Calu3 (cell line): ENCODE measurements at regions of chr1 and their contacts with region 1.

Region 1: DNA sequence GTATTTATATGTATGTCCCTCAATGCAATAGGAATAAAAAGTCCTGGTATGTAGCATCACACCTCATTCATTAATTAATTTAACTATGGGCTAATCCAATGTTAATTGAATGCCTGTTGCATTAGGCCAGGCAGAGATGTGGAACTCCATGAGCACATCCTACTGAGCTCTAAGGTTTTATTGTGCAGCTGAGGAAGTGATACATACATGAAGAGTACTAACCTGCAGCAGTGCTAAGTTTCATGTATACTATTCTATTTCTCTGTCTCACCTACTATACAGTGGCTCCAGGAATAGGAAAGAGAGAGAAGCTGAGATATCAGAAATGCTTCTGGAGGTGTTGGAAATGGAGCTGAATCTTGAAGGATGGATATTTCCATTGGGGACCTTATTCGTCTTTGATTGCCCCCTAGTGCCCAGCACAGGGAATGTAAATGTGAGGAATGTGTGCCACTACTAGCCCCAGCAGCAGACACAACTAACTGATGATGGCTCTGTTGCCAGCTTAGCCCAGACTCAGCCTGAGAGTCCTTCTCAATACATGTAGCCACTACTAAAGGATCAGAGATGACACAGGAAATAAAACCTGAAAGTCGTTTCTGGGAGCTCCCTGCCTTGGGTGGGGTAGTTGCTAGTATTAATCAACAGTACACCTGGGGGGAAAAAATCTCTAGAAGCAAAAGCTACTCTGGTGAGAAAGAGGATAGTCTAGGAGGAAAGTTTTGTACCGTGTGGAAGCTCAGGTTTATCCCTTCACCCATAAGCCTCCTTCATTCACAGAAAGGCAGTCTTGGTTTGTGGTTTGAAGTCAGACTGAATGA is 173.3 kb upstream of the FOXD3 start:
- DNase-seq: peak; percentile 63
- H3K4me3 Mint-ChIP-seq: no peak overlapping the region
- H3K27ac Mint-ChIP-seq: no peak overlapping the region
- H3K4me1 Mint-ChIP-seq: no peaks in the 10 kb centered on the region
- H3K27me3 Mint-ChIP-seq: peaks cover 52% of the 10 kb centered on the region
- CTCF ChIP-seq: peak; percentile 68

Region 2: GRCh38 chr1:62841587-62842169 is 307.4 kb before region 1 on chr1:
- CTCF ChIA-PET with region 1: interaction called, 5 read pairs
- intact Hi-C with region 1: loop called (anchors 2 kb)
- DNase-seq: peak; percentile 44
- H3K4me3 Mint-ChIP-seq: no peak overlapping the region
- H3K27ac Mint-ChIP-seq: no peak overlapping the region
- H3K4me1 Mint-ChIP-seq: no peaks in the 10 kb centered on the region
- H3K27me3 Mint-ChIP-seq: no peaks in the 10 kb centered on the region
- CTCF ChIP-seq: peak; percentile 64

Region 3: GRCh38 chr1:62912028-62912638 is 236.9 kb before region 1 on chr1:
- CTCF ChIA-PET with region 1: interaction called, 3 read pairs
- intact Hi-C with region 1: loop called (anchors 5 kb)
- DNase-seq: peak; percentile 8
- H3K4me3 Mint-ChIP-seq: no peak overlapping the region
- H3K27ac Mint-ChIP-seq: no peak overlapping the region
- H3K4me1 Mint-ChIP-seq: no peaks in the 10 kb centered on the region
- H3K27me3 Mint-ChIP-seq: peaks cover 42% of the 10 kb centered on the region
- CTCF ChIP-seq: peak; percentile 47

Region 4: DNA sequence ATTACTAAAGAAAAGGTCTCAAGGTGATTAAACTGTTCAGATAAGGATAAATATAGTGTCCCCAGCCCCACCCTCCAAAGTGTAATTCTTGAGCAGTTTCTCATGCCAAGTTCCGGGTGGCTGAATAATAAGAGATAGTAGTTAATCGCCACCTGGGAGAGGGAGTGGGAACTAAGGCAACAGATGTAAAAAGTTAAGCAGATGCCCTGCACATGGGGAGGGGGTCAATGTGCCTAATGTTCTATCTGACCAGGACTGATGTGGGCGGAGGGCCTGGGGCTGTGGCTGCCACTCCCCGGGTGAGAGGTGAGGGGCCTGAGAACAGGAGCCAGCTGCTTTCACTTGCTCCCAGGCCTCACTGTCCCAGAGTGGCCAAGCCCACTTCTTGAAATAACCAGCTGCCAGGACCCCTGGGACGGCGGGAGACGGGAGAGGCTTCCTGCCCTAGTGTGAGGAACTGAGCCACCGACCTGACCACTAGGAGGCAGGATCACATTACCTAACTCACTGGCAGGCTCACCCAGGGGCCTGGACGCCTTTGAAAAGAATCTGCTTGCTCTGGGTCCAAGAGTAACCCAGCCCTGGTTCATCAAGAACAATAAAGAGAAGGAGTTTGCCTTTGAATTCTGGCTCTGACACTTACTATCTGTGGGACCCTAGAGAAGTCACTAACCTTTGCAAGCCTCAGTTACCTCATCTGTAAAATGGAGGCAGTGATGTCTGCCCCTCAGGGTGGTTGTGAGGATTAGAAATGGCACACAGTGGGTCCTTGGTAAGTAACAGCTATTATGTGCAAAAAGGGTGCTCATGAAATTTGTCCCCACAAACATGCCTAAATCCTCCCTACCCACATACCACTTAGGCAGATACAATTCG is 185.9 kb before region 1 on chr1:
- CTCF ChIA-PET with region 1: interaction called, 3 read pairs
- intact Hi-C with region 1: loop called (anchors 1 kb)
- DNase-seq: peak; percentile 61
- H3K4me3 Mint-ChIP-seq: no peak overlapping the region
- H3K27ac Mint-ChIP-seq: no peak overlapping the region
- H3K4me1 Mint-ChIP-seq: peaks cover 13% of the 10 kb centered on the region
- H3K27me3 Mint-ChIP-seq: peaks cover 19% of the 10 kb centered on the region
- CTCF ChIP-seq: peak; percentile 56

Region 5: GRCh38 chr1:62977366-62977765 is 171.7 kb before region 1 on chr1:
- CTCF ChIA-PET with region 1: no interaction called
- intact Hi-C with region 1: no loop called
- DNase-seq: no peak
- H3K4me3 Mint-ChIP-seq: no peak overlapping the region
- H3K27ac Mint-ChIP-seq: no peak overlapping the region
- H3K4me1 Mint-ChIP-seq: no peaks in the 10 kb centered on the region
- H3K27me3 Mint-ChIP-seq: peaks cover 49% of the 10 kb centered on the region
- CTCF ChIP-seq: no peak

Region 6: GRCh38 chr1:63004868-63005267 is 144.2 kb before region 1 on chr1:
- CTCF ChIA-PET with region 1: interaction called, 33 read pairs
- intact Hi-C with region 1: loop called (anchors 2 kb)
- DNase-seq: peak; percentile 44
- H3K4me3 Mint-ChIP-seq: no peak overlapping the region
- H3K27ac Mint-ChIP-seq: no peak overlapping the region
- H3K4me1 Mint-ChIP-seq: no peaks in the 10 kb centered on the region
- H3K27me3 Mint-ChIP-seq: peaks cover 59% of the 10 kb centered on the region
- CTCF ChIP-seq: peak; percentile 37

Region 7: DNA sequence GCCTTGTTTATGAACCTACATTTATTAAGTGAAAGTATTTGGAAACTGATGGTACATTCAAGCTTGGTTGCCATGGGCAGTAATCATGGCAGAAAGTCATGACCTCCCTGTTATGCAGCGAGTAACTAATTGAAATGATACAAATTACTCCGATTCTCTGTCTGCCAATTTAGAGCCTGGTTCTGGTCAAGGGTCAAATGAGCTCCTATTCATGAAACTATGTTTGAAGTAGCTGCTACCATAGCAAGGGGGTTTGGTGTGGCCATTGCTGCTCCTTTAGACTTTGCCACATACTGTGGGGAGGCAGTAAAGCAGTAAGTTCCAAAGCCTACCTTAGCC is 13.9 kb before region 1 on chr1:
- CTCF ChIA-PET with region 1: interaction called, 11 read pairs
- intact Hi-C with region 1: no loop called
- DNase-seq: no peak
- H3K4me3 Mint-ChIP-seq: no peak overlapping the region
- H3K27ac Mint-ChIP-seq: no peak overlapping the region
- H3K4me1 Mint-ChIP-seq: peaks cover 7% of the 10 kb centered on the region
- H3K27me3 Mint-ChIP-seq: peaks cover 8% of the 10 kb centered on the region
- CTCF ChIP-seq: no peak

Region 8: GRCh38 chr1:63316984-63317816 is 168.2 kb after region 1 on chr1:
- CTCF ChIA-PET with region 1: no interaction called
- intact Hi-C with region 1: no loop called
- DNase-seq: peak; percentile 95
- H3K4me3 Mint-ChIP-seq: peak overlapping the region; percentile 66
- H3K27ac Mint-ChIP-seq: no peak overlapping the region
- H3K4me1 Mint-ChIP-seq: peaks cover 8% of the 10 kb centered on the region
- H3K27me3 Mint-ChIP-seq: peaks cover 22% of the 10 kb centered on the region
- CTCF ChIP-seq: peak; percentile 77

Region 9: GRCh38 chr1:63575340-63575826 is 426.3 kb after region 1 on chr1:
- CTCF ChIA-PET with region 1: no interaction called
- intact Hi-C with region 1: no loop called
- DNase-seq: peak; percentile 35
- H3K4me3 Mint-ChIP-seq: no peak overlapping the region
- H3K27ac Mint-ChIP-seq: no peak overlapping the region
- H3K4me1 Mint-ChIP-seq: no peaks in the 10 kb centered on the region
- H3K27me3 Mint-ChIP-seq: no peaks in the 10 kb centered on the region
- CTCF ChIP-seq: peak; percentile 51